CD8-positive, alpha-beta T cell (primary cell): ENCODE measurements at regions of chr13 and their contacts with region 1.

Region 1: GRCh38 chr13:36282818-36283445 is 14.7 kb downstream of the CCDC169 start:
- DNase-seq: peak in 2 of 9 experiments; percentile 8 to 19
- ATAC-seq: no peak
- H3K4me3 ChIP-seq: no peak overlapping the region
- H3K4me3 Mint-ChIP-seq: no peak overlapping the region
- H3K27ac ChIP-seq: no peak overlapping the region
- H3K27ac Mint-ChIP-seq: no peak overlapping the region
- H3K4me1 ChIP-seq: no peaks in the 10 kb centered on the region
- H3K4me1 Mint-ChIP-seq: no peaks in the 10 kb centered on the region
- H3K27me3 ChIP-seq: no peaks in the 10 kb centered on the region
- H3K27me3 Mint-ChIP-seq: no peaks in the 10 kb centered on the region
- CTCF ChIP-seq: peak; percentile 73

Region 2: GRCh38 chr13:36736119-36736726 is 453.3 kb after region 1 on chr13:
- CTCF ChIA-PET with region 1: no interaction called
- POLR2A ChIA-PET with region 1: no interaction called
- intact Hi-C with region 1: loop called in 1 of 2 experiments (anchors 1 kb)
- DNase-seq: peak in 5 of 9 experiments; percentile 3 to 50 (median 30)
- ATAC-seq: no peak
- H3K4me3 ChIP-seq: no peak overlapping the region
- H3K4me3 Mint-ChIP-seq: no peak overlapping the region
- H3K27ac ChIP-seq: no peak overlapping the region
- H3K27ac Mint-ChIP-seq: no peak overlapping the region
- H3K4me1 ChIP-seq: no peaks in the 10 kb centered on the region
- H3K4me1 Mint-ChIP-seq: no peaks in the 10 kb centered on the region
- H3K27me3 ChIP-seq: no peaks in the 10 kb centered on the region
- H3K27me3 Mint-ChIP-seq: peaks cover 2% of the 10 kb centered on the region
- CTCF ChIP-seq: peak; percentile 64

Region 3: DNA sequence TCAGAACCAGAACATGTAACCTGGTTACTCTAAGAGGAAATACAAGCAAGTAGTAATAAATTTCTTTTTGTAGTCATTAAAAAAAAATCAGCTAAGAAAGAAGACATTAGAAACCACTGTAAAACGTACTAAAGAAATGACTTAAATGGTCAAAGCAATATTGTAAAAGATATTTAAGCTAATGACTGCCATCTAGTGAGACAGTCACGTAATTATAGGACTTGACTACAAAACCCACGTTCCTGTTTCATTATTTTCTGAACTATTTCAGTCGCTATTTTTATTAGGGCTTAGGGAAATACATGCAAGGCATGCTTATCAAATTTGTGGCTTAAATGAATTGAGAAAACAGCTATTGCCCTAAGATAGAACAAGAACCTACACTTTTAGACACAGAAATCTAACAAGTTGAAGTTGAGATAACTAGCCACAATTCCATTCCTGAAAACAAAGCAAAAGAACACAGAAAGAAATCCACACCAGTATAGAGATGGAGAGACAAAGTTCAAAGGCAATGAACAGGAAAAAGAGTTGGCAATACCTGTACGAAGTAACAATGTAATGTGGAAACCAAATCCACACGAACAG is 698.3 kb after region 1 on chr13:
- CTCF ChIA-PET with region 1: no interaction called
- POLR2A ChIA-PET with region 1: no interaction called
- intact Hi-C with region 1: loop called in 1 of 2 experiments (anchors 2 kb)
- DNase-seq: peak in 1 of 9 experiments; percentile 28
- ATAC-seq: no peak
- H3K4me3 ChIP-seq: no peak overlapping the region
- H3K4me3 Mint-ChIP-seq: no peak overlapping the region
- H3K27ac ChIP-seq: no peak overlapping the region
- H3K27ac Mint-ChIP-seq: no peak overlapping the region
- H3K4me1 ChIP-seq: no peaks in the 10 kb centered on the region
- H3K4me1 Mint-ChIP-seq: peaks cover 2% of the 10 kb centered on the region
- H3K27me3 ChIP-seq: no peaks in the 10 kb centered on the region
- H3K27me3 Mint-ChIP-seq: no peaks in the 10 kb centered on the region
- CTCF ChIP-seq: peak; percentile 37